GM23248 (cell line): ENCODE measurements at regions of chr7 and their contacts with region 1.

Region 1: DNA sequence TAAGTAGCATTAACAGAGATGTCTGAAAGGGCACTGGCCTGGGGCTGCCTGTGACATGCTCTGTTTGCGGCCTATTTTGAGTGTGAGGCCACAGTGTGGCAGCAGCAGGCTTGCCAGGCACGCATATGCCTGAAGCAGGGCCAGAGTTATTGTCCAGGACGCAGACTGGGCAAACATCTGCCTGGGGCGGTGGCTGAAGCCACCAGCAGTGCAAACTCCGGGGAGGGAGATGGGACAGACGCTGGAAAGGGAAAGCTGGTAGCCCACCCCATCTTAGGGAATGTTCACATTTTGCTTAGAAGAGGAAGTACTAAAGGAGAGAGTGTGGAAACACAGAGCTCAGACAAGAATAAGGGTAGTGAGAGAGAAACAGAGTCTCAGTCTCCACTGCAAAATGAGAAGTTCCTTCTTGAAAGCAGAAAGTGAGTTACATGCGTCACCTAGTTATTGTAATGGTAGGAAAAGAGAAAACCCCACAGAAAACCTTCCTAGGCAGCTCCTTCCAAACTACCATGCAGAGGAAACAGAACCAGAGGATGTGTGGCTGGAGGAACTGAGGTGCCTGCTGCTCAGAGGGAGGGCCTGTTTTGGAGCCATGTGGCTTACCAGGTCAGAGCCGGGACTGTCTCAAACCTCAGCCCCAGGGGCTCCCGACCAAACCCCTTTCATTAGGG is 14.6 kb downstream of the AKR1B1 start:
- DNase-seq: no peak
- H3K4me3 ChIP-seq: no peak overlapping the region
- H3K27ac ChIP-seq: no peak overlapping the region
- H3K4me1 ChIP-seq: peaks cover 8% of the 10 kb centered on the region
- H3K27me3 ChIP-seq: no peaks in the 10 kb centered on the region

Region 2: DNA sequence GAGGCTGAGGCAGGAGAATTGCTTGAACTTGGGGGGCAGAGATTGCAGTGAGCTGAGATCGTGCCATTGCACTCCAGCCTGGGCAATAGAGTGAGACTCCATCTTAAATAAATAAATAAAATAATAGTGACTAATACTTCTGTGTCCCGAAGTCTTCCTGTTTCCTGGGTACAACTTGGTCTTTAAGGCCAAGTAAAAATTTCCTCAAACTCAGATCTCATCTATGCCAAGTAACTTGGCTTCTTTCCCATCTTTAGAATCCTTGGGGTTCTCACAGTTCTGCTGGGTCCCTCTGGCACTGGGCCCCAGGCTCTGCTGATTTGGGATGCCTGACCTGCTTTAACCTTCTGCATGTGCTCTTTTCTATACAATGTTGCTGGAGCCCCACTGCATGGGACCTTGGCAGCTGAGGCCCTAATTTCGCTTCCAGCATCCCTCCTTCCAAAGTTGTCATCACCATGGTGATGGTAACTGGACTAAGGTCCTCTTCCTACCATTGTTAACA is 60.4 kb after region 1 on chr7:
- in situ Hi-C with region 1: loop called (anchors 5 kb)
- DNase-seq: no peak
- H3K4me3 ChIP-seq: no peak overlapping the region
- H3K27ac ChIP-seq: no peak overlapping the region
- H3K4me1 ChIP-seq: no peaks in the 10 kb centered on the region
- H3K27me3 ChIP-seq: no peaks in the 10 kb centered on the region